GM12878 (cell line): ENCODE measurements at regions of chr12 and their contacts with region 1.

Region 1: DNA sequence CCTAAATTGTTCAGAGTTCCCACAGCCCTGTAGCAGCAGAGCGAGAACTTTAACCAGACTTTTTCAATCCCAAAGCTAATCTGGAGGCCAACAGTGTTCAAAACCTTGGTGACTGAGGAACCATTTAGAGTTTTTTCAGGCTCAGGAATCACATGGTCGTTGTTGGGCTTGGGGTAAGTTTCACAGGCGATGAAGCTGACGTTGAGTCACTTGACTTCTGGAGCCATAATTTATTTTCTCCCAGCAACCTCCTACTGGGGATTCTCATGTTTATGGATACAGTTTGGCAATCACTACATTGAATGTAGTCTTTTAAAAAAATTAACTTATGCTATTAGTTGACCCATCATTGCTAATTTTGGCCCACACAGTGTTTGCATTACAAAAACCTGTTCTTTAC is 34.5 kb downstream of the SSPN start:
- DNase-seq: no peak
- ATAC-seq: no peak
- H3K4me3 ChIP-seq: no peak overlapping the region
- H3K27ac ChIP-seq: no peak overlapping the region
- H3K4me1 ChIP-seq: no peaks in the 10 kb centered on the region
- H3K27me3 ChIP-seq: peaks cover 4 to 7% of the 10 kb centered on the region in 2 experiments; a peak in 2 of 4 replicates
- CTCF ChIP-seq: no peak
- EP300 ChIP-seq: no peak
- POLR2A ChIP-seq: no peak
- RAD21 ChIP-seq: no peak

Region 2: GRCh38 chr12:26219736-26220135 is 10.2 kb before region 1 on chr12:
- CTCF ChIA-PET with region 1: interaction called, 4 read pairs
- POLR2A ChIA-PET with region 1: no interaction called
- RAD21 ChIA-PET with region 1: interaction called, 4 read pairs
- SMC1A ChIA-PET with region 1: interaction called, 12 read pairs
- in situ Hi-C with region 1: no loop called
- intact Hi-C with region 1: no loop called
- DNase-seq: no peak
- ATAC-seq: no peak
- H3K4me3 ChIP-seq: no peak overlapping the region
- H3K27ac ChIP-seq: no peak overlapping the region
- H3K4me1 ChIP-seq: no peaks in the 10 kb centered on the region
- H3K27me3 ChIP-seq: peaks cover 0 to 1% of the 10 kb centered on the region in 2 experiments; a peak in 1 of 4 replicates
- CTCF ChIP-seq: no peak
- EP300 ChIP-seq: no peak
- POLR2A ChIP-seq: no peak
- RAD21 ChIP-seq: no peak